Activated naive CD4-positive, alpha-beta T cell treated with anti-CD3 and anti-CD28 coated beads for 36 hours (primary cell): ENCODE measurements at regions of chr3 and their contacts with region 1.

Region 1: DNA sequence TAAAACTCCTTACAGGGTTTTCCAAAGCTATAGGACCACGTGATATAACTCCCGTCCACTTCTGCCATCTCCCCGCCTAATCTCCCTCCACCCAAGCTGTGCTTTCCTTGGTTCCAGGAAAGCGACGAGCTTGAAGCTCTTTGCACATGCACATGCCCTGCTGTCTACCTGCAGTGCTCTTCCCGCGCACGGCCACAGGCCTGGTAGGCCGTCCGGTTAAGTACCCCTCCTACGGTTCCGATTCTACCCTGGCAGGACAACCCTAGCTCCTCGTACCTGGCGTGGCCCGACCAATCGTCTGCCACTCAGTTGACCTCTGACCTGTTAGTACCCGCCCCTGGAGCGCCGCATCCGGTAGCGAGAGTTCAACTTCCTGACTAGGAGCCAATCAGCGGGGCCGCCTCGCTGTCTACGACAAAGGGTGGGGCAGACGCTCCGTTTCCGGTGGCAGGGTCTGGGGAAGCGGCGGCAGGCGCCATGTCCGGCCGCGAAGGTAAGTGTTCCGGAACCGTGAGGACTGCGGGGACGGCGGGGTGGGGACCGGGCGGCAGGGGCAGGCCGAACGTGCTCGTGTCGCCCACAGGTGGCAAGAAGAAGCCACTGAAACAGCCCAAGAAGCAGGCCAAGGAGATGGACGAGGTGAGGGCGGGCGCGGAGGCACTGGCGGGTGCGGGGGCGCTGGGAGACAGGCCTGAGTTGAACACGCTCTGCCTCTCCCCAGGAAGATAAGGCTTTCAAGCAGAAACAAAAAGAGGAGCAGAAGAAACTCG is at the starts of genes CCDC51 and TMA7:
- DNase-seq: peak; percentile 100
- H3K4me3 Mint-ChIP-seq: peak within 1 kb of the TSS; percentile 93
- H3K27ac Mint-ChIP-seq: peak within 1 kb of the TSS; percentile 96
- H3K4me1 Mint-ChIP-seq: peaks cover 44% of the 10 kb centered on the region
- H3K27me3 Mint-ChIP-seq: no peaks in the 10 kb centered on the region
- total RNA-seq, gene CCDC51: 16.4 to 17.4 TPM
- total RNA-seq, gene TMA7: 319 to 353 TPM

Region 2: DNA sequence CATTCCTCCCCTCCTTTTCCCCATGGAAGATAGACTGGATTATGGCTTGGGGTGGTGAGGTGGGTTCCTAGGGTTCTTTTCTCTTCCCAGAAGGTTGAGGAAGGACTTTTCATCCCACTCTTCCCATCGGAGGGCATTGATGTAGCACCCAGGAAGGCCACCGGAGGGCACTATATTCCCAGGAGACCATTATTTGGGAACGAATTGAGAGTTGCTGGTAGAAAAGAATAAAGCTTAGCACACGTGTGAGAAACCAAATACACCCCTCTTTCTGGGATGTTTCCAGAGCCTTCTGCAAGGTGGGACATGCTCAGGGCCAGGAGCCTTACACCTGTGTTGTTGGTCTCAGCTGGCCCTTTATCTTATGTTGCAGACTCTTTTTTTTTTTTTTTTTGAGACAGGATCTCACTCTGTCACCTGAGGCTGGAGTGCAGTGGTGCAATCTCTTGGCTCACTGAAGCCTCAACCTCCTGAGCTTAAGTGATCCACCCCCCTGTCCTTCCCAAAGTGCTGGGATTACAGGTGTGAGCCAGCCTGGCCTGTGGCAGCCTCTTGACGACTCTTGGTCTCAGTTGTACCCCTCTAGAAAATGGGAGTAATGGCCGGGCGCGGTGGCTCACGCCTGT is 245.4 kb before region 1 on chr3:
- CTCF ChIA-PET with region 1: interaction called, 11 read pairs
- intact Hi-C with region 1: no loop called
- DNase-seq: peak; percentile 50
- H3K4me3 Mint-ChIP-seq: no peak overlapping the region
- H3K27ac Mint-ChIP-seq: no peak overlapping the region
- H3K4me1 Mint-ChIP-seq: no peaks in the 10 kb centered on the region
- H3K27me3 Mint-ChIP-seq: peaks cover 3% of the 10 kb centered on the region

Region 3: DNA sequence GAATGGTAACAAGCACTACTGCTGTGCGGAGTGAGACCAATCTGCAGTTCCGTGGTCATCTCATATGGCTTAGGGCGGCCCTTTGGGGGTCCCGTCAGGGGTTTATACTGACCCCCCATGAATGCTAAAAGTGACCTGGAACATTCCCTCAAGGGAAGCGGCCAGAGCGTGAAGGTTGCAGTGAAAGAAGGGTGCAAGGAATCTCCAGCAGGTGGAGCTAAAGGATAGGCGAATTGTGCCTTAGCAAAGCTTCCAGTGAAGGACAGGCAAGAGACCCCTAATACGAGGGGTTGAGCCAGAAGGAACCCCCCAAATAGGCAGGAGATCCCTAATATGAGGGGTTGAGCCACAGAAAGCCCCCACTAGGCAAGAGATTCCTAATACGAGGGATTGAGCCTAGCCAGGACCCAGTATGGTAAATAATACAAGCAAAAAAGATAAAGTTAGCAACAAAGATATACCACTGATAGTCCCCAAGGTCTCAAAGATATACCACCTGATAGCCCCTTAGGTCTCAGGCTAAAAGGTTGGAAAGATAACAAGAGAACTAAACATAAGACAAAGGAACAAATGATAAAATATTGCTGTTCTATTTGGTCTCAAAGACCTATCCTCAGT is 166.3 kb before region 1 on chr3:
- CTCF ChIA-PET with region 1: interaction called, 93 read pairs
- intact Hi-C with region 1: loop called (anchors 1 kb)
- DNase-seq: peak; percentile 71
- H3K4me3 Mint-ChIP-seq: no peak overlapping the region
- H3K27ac Mint-ChIP-seq: no peak overlapping the region
- H3K4me1 Mint-ChIP-seq: peaks cover 14% of the 10 kb centered on the region
- H3K27me3 Mint-ChIP-seq: no peaks in the 10 kb centered on the region

Region 4: DNA sequence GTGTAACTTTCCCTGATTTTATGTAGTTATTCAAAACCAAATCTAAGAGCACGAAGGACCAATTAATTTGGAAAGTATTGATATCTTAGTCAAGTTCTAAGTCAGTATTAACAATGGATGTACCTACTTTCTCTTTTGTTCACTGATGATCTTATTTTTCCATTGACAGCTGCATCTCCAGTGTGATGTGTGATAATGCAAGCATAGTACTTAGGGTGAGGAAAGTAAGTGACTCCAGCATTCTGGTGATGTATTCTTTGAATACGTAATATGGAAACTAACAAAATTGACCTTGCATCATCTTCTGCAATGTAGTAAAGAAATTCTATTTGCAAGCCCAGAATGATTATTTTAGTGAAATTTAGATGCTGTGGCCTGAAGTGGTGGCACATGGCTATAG is 45.6 kb before region 1 on chr3:
- CTCF ChIA-PET with region 1: interaction called, 162 read pairs
- intact Hi-C with region 1: no loop called
- DNase-seq: no peak
- H3K4me3 Mint-ChIP-seq: no peak overlapping the region
- H3K27ac Mint-ChIP-seq: no peak overlapping the region
- H3K4me1 Mint-ChIP-seq: peaks cover 5% of the 10 kb centered on the region
- H3K27me3 Mint-ChIP-seq: peaks cover 6% of the 10 kb centered on the region

Region 5: DNA sequence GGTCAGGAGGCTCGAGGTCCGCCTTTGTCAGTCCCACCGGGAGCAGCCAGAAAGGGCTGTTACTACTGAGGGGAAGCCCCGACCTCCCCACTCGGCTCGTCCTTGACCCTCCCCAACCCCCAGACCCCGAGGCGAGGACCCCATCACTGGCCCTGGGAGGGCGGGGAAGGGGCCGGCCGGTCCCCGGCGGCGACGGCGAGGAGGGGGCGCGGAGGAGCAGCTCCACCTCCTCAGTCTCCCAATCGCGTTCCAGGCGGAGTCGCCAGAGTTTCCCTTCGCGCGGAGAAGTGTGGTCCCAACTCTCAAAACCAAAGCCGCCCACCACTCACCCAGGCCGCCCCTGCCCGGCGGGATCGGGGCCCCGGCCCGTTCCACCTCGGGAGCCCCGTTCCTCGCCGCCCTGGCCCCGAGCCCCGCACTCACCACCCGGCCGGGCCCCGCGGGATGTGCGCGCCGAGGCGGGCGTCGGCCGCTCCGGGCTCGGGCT is 11.1 kb before region 1 on chr3:
- CTCF ChIA-PET with region 1: interaction called, 22 read pairs
- intact Hi-C with region 1: no loop called
- DNase-seq: no peak
- H3K4me3 Mint-ChIP-seq: peak overlapping the region; percentile 44
- H3K27ac Mint-ChIP-seq: no peak overlapping the region
- H3K4me1 Mint-ChIP-seq: peaks cover 11% of the 10 kb centered on the region
- H3K27me3 Mint-ChIP-seq: peaks cover 7% of the 10 kb centered on the region

Region 6: GRCh38 chr3:48548729-48549705 is 109.0 kb after region 1 on chr3:
- CTCF ChIA-PET with region 1: interaction called, 72 read pairs
- intact Hi-C with region 1: no loop called
- DNase-seq: peak; percentile 93
- H3K4me3 Mint-ChIP-seq: no peak overlapping the region
- H3K27ac Mint-ChIP-seq: no peak overlapping the region
- H3K4me1 Mint-ChIP-seq: peaks cover 4% of the 10 kb centered on the region
- H3K27me3 Mint-ChIP-seq: no peaks in the 10 kb centered on the region